ENCODE measurements at regions of chr15 and their contacts with region 1.

Region 1: DNA sequence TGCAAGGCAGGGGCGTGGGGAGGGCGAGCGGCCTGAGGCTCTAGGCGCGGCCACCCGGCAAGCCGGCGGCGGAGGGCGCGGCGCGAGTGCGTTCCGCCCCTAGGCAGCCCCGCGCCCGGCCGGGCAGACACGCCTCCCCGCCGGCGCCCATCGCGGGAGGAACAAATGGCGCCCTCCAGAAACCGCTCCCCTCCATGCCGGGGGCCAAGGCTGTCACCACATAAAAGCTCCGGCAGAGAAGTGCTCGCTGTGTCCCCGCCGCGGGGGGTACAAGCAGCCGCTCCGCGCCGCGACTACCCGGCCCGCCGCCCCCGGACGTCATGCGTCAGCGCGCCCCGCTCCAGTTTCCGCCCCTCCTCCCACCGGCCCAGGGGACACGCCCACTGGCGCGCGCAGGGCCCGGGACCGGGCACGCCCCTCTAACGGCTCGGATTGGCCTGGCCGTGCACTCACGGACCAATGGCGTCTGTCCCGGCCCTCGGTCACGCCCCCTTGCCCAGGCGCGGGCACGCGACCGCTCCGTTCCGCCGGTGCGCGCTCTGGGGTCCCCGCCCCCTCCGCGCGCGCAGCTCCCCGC is 391 bp upstream of the KLF13 start:
- DNase-seq: peak; percentile 97 to 100 (median 100)
- H3K4me3 ChIP-seq: peak overlapping the region in 1 of 2 donors; percentile 77
- H3K4me3 Mint-ChIP-seq: peak overlapping the region; percentile 53 to 90 (median 78)
- H3K27ac ChIP-seq: peak overlapping the region; percentile 92
- H3K27ac Mint-ChIP-seq: peak overlapping the region; percentile 64 to 92 (median 83)
- H3K4me1 ChIP-seq: peaks cover 43% of the 10 kb centered on the region
- H3K4me1 Mint-ChIP-seq: peaks cover 26 to 48% (median 37%) of the 10 kb centered on the region in 4 donors
- H3K27me3 ChIP-seq: no peaks in the 10 kb centered on the region
- H3K27me3 Mint-ChIP-seq: no peaks in the 10 kb centered on the region

Region 2: DNA sequence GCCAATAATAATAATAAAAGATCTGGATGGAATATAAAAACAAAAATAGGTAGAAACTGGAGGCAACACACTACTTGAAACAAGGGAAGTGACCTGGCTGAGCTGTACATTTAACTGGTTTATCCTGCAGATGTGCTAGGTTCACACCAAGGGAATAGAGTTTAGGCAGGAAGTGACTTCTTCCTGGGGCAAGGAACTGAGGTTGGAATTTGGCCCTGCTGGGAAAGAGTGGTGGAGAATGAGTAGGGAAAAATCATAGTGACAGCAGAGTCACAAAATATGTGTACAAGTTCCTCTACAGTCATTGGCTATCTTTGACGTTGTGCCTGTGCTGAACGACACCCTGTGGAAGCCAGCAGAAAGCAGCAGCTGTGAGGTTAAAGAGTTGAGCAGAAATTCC is 656.2 kb before region 1 on chr15:
- CTCF ChIA-PET with region 1: no interaction called
- POLR2A ChIA-PET with region 1: no interaction called
- intact Hi-C with region 1: no loop called
- DNase-seq: no peak
- H3K4me3 ChIP-seq: no peak overlapping the region
- H3K4me3 Mint-ChIP-seq: no peak overlapping the region
- H3K27ac ChIP-seq: no peak overlapping the region
- H3K27ac Mint-ChIP-seq: peak overlapping the region in 1 of 7 donors; percentile 3
- H3K4me1 ChIP-seq: no peaks in the 10 kb centered on the region
- H3K4me1 Mint-ChIP-seq: no peaks in the 10 kb centered on the region
- H3K27me3 ChIP-seq: no peaks in the 10 kb centered on the region
- H3K27me3 Mint-ChIP-seq: no peaks in the 10 kb centered on the region

Region 3: DNA sequence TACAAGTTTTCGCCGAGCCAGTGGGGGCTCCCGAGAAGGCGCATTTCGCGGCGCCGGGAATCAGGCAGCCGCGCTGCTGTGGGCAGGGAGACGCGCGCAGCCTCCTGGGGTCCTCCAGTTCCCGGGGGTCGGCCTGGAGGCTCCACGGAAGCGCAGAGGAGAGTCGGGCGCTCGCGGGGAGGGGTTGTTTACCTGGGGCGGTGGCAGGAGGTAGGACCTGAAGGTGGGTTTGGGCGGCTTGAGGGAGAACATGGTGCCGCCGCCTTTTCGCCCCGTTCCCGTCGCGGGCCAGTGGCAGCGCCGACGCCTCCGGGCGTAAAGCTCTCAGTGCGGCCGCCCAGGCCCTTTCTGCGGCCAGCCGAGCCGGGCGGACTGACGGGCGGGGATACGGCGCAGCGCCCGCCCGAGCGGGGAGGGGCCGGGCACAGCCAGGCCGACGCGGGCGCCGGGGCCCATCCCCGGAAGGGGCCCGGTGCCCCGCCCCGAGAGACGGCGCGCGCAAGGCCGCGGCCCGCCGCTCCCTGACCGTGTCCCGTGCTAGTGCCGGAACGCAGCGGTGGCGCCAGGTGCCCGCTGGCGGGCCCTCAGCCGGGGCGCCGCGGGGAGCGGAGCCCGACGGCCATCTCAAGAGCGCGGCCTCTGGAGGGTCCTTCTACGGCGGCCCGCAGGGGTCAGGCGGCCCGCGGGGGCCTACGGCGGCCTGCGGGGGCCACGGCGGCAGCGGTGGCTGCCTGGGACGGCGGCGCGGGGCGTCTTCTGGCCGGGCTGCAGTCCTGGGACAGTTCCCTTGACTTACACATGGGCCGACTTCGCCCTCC is 334.8 kb before region 1 on chr15 and contains the start of gene MTMR10:
- CTCF ChIA-PET with region 1: no interaction called
- POLR2A ChIA-PET with region 1: no interaction called
- intact Hi-C with region 1: loop called (anchors 10 kb)
- DNase-seq: peak; percentile 70 to 84 (median 82)
- H3K4me3 ChIP-seq: peak within 1 kb of the TSS; percentile 64 to 76
- H3K4me3 Mint-ChIP-seq: peak within 1 kb of the TSS; percentile 94 to 98 (median 96)
- H3K27ac ChIP-seq: peak within 1 kb of the TSS; percentile 76
- H3K27ac Mint-ChIP-seq: peak within 1 kb of the TSS; percentile 89 to 95 (median 94)
- H3K4me1 ChIP-seq: peaks cover 30% of the 10 kb centered on the region
- H3K4me1 Mint-ChIP-seq: peaks cover 19 to 32% (median 27%) of the 10 kb centered on the region in 4 donors
- H3K27me3 ChIP-seq: no peaks in the 10 kb centered on the region
- H3K27me3 Mint-ChIP-seq: no peaks in the 10 kb centered on the region
- total RNA-seq, gene MTMR10: 29.6 to 31.8 TPM

Region 4: DNA sequence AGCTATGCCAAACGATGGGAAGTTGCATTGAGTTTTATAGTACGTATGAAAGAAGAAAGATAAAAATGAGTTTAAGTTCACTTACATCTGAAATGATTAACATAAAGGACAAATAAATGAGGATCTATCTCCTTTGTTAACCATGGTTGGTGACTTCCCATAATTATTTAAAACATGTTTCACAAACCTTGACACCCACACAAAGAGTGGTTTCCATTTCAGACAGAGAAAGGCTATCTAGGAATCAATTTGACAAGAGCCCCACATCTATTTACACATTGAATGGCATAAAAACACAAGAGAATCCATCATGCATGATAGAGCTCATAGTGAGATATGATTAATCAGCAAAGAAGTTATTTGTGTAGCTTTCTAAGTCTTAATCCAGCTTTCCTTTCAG is 320.6 kb before region 1 on chr15:
- CTCF ChIA-PET with region 1: no interaction called
- POLR2A ChIA-PET with region 1: no interaction called
- intact Hi-C with region 1: no loop called
- DNase-seq: no peak
- H3K4me3 ChIP-seq: no peak overlapping the region
- H3K4me3 Mint-ChIP-seq: no peak overlapping the region
- H3K27ac ChIP-seq: no peak overlapping the region
- H3K27ac Mint-ChIP-seq: no peak overlapping the region
- H3K4me1 ChIP-seq: peaks cover 5% of the 10 kb centered on the region
- H3K4me1 Mint-ChIP-seq: peaks cover 6 to 7% (median 6%) of the 10 kb centered on the region in 4 donors
- H3K27me3 ChIP-seq: no peaks in the 10 kb centered on the region
- H3K27me3 Mint-ChIP-seq: peaks cover 14 to 23% of the 10 kb centered on the region in 2 donors

Region 5: GRCh38 chr15:31098953-31099740 is 227.1 kb before region 1 on chr15:
- CTCF ChIA-PET with region 1: no interaction called
- POLR2A ChIA-PET with region 1: no interaction called
- intact Hi-C with region 1: no loop called
- DNase-seq: no peak
- H3K4me3 ChIP-seq: no peak overlapping the region
- H3K4me3 Mint-ChIP-seq: no peak overlapping the region
- H3K27ac ChIP-seq: no peak overlapping the region
- H3K27ac Mint-ChIP-seq: no peak overlapping the region
- H3K4me1 ChIP-seq: no peaks in the 10 kb centered on the region
- H3K4me1 Mint-ChIP-seq: no peaks in the 10 kb centered on the region
- H3K27me3 ChIP-seq: no peaks in the 10 kb centered on the region
- H3K27me3 Mint-ChIP-seq: peaks cover 2 to 12% of the 10 kb centered on the region in 2 donors

Region 6: DNA sequence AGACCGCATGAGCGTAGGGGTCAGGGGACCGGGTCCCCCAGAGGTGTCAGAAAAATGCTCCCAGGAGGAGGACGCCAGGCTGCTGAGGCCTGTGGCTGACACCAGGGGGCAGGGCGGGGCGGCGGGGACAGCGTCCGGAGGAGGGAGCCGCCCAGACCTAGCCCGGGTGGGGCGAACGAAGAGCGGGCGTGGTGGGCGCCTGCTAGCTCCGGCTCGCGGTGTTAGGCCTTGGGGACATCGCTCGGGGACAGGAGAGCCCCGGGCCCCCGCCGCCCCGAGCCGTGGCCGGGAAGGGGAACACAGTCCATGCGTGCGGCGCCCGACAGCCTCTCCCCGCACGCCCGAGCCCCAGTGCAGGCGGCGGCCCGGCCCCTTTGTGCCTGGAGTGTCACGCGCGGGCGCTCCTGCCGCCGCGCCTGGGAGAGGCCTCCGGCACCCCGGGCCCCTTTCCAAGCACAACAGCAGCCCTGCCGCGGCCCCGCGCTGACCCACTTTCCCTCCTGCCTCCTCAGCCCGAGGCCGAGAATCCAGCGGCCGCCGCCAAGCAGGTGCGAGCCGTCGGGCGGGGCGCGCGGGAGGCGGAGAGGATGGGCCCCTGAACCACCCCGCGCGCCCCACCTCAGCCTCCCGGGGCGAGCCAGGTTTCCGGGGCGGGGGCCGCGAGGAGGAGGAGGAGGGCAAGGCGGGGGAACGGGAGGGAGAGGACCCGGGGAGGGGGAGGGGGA is 110.6 kb before region 1 on chr15:
- CTCF ChIA-PET with region 1: interaction called, 12 read pairs
- POLR2A ChIA-PET with region 1: interaction called, 78 read pairs
- intact Hi-C with region 1: loop called (anchors 1 kb)
- DNase-seq: peak; percentile 70 to 76 (median 72)
- H3K4me3 ChIP-seq: peak overlapping the region in 1 of 2 donors; percentile 38
- H3K4me3 Mint-ChIP-seq: peak overlapping the region; percentile 54 to 76 (median 73)
- H3K27ac ChIP-seq: peak overlapping the region; percentile 52
- H3K27ac Mint-ChIP-seq: peak overlapping the region in 6 of 7 donors; percentile 32 to 87 (median 78)
- H3K4me1 ChIP-seq: peaks cover 30% of the 10 kb centered on the region
- H3K4me1 Mint-ChIP-seq: peaks cover 18 to 34% (median 28%) of the 10 kb centered on the region in 4 donors
- H3K27me3 ChIP-seq: no peaks in the 10 kb centered on the region
- H3K27me3 Mint-ChIP-seq: no peaks in the 10 kb centered on the region

Region 7: GRCh38 chr15:31311735-31312619 is 14.3 kb before region 1 on chr15:
- CTCF ChIA-PET with region 1: interaction called, 3 read pairs
- POLR2A ChIA-PET with region 1: interaction called, 22 read pairs
- intact Hi-C with region 1: no loop called
- DNase-seq: no peak
- H3K4me3 ChIP-seq: no peak overlapping the region
- H3K4me3 Mint-ChIP-seq: no peak overlapping the region
- H3K27ac ChIP-seq: no peak overlapping the region
- H3K27ac Mint-ChIP-seq: no peak overlapping the region
- H3K4me1 ChIP-seq: peaks cover 12% of the 10 kb centered on the region
- H3K4me1 Mint-ChIP-seq: peaks cover 7 to 18% (median 11%) of the 10 kb centered on the region in 4 donors
- H3K27me3 ChIP-seq: no peaks in the 10 kb centered on the region
- H3K27me3 Mint-ChIP-seq: peaks cover 0 to 5% of the 10 kb centered on the region in 2 donors

Region 8: DNA sequence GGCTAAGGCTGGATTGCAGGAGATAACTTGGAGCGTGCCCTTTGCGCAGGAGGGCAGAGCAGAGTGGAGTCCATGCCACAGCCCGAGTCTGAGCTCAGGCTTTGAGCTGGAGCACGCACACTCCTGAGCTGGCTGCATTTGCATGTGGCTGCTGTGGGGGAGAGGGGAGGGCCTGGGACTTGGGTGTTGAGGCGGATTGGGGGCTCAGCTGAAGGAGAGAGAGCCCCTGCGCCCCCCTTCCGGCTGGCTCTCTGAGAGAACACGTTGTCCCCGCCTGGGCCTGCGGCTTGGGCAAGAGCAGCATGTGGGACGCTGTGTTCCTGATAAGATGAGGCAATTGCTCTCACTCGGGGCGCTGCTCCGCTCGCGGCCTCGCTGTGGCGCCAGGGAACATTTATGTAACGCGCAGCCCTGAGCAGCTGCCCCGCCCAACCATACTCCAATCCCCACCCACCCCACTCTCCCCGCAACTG is 39.4 kb after region 1 on chr15:
- CTCF ChIA-PET with region 1: interaction called, 9 read pairs
- POLR2A ChIA-PET with region 1: interaction called, 528 read pairs
- intact Hi-C with region 1: loop called (anchors 1 kb)
- DNase-seq: peak; percentile 71 to 84 (median 77)
- H3K4me3 ChIP-seq: peak overlapping the region in 1 of 2 donors; percentile 17
- H3K4me3 Mint-ChIP-seq: peak overlapping the region; percentile 79 to 91 (median 84)
- H3K27ac ChIP-seq: peak overlapping the region; percentile 82
- H3K27ac Mint-ChIP-seq: peak overlapping the region; percentile 91 to 98 (median 96)
- H3K4me1 ChIP-seq: peaks cover 99% of the 10 kb centered on the region
- H3K4me1 Mint-ChIP-seq: peaks cover 70 to 100% (median 92%) of the 10 kb centered on the region in 4 donors
- H3K27me3 ChIP-seq: no peaks in the 10 kb centered on the region
- H3K27me3 Mint-ChIP-seq: no peaks in the 10 kb centered on the region

Region 9: DNA sequence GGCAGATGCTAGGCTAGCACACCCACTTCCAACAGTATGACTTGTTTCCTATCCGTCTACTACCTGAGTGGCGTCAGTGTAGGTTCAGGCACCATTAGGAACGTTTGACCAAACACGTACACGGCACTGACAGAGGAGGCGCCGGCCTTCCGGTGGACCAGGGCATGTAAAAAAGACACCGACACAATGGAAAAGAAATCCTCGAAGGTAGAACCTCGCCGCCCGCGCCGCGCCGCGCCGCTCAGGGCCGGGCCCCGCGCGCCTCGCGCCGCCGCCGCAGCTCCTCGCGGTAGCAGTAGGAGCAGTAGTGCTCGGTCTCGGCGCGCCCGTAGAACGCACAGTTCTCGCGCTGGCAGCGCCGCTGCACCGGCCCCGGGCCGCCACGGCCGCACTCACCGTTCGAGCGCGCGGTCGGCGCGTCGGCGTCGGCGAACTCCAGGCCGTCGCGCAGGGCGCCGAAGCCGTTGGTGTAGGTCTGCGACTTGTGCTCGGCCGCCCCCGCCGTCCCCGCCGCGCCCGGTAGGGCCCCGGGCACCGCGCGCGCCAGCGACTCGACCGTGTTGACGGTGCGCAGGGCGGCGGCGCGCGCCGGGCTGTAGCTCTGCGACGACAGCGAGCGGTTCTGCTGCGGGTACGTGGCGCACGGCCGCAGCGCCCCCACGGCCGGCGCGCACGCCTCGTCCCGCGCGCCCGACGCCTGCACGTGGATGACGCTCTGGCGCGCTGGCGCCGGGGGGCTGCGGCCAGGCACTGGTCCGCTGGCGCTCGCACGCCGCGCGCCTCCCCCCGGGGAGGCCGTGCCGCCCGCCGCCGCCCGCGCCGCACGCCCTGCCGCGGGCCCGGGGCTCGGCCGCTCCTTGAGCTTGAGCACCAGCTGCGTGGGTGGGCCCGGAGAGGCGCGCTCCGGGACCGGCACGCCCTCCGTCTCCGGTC is 157.1 kb after region 1 on chr15:
- CTCF ChIA-PET with region 1: interaction called, 37 read pairs
- POLR2A ChIA-PET with region 1: interaction called, 67 read pairs
- intact Hi-C with region 1: loop called (anchors 1 kb)
- DNase-seq: peak; percentile 48 to 64 (median 56)
- H3K4me3 ChIP-seq: peak overlapping the region in 1 of 2 donors; percentile 29
- H3K4me3 Mint-ChIP-seq: peak overlapping the region; percentile 91 to 96 (median 96)
- H3K27ac ChIP-seq: no peak overlapping the region
- H3K27ac Mint-ChIP-seq: peak overlapping the region; percentile 75 to 97 (median 92)
- H3K4me1 ChIP-seq: peaks cover 46% of the 10 kb centered on the region
- H3K4me1 Mint-ChIP-seq: peaks cover 21 to 69% (median 39%) of the 10 kb centered on the region in 4 donors
- H3K27me3 ChIP-seq: no peaks in the 10 kb centered on the region
- H3K27me3 Mint-ChIP-seq: no peaks in the 10 kb centered on the region